ENCODE measurements at regions of chr2 and their contacts with region 1.

Region 1: GRCh38 chr2:201363857-201364560 is 6.9 kb upstream of the FLACC1 start:
- DNase-seq: peak; percentile 64
- ATAC-seq: peak; percentile 90
- H3K4me3 ChIP-seq: no peak overlapping the region
- H3K27ac ChIP-seq: no peak overlapping the region
- H3K4me1 ChIP-seq: no peaks in the 10 kb centered on the region
- H3K27me3 ChIP-seq: no peaks in the 10 kb centered on the region
- CTCF ChIP-seq: peak; percentile 90
- EP300 ChIP-seq: no peak
- POLR2A ChIP-seq: no peak
- RAD21 ChIP-seq: peak; percentile 77

Region 2: DNA sequence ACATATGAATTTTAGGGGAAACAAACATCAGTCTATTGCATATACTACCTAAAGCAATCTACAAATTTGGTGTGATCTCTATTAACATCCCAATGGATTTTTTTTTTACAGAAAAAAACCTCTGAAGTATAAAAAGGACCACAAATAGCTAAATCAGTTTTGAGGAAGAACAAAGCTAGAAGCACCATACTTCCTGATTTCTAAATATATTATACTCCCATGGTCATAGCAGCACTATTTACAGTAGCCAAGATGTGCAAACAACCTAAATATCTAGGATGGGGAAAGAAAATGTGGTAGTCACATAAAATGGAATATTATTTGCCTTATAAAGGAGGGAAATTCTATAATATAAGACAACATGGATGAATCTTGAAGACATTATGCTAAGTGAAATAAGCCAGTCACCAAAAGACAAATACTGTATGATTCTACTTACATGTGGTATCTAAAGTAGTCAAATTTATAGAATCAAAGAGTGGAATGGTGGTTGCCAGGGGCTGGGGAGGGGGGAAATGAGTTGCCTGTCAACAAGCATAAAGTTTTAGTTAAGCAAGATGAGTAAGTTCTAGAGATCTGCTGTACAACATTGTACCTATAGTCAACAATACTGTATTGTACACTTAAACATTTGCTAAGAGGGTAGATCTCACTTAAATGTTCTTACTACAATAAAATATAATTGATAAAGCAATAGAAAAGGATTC is 121.3 kb before region 1 on chr2:
- CTCF ChIA-PET with region 1: interaction called, 3 read pairs
- POLR2A ChIA-PET with region 1: no interaction called
- in situ Hi-C with region 1: loop called (anchors 5 kb)
- intact Hi-C with region 1: no loop called
- DNase-seq: no peak
- ATAC-seq: no peak
- H3K4me3 ChIP-seq: no peak overlapping the region
- H3K27ac ChIP-seq: no peak overlapping the region
- H3K4me1 ChIP-seq: 0 out of 2 replicates have a peak, but pooled peaks cover 3% of the 10 kb centered on the region
- H3K27me3 ChIP-seq: no peaks in the 10 kb centered on the region
- CTCF ChIP-seq: no peak
- EP300 ChIP-seq: no peak
- POLR2A ChIP-seq: no peak
- RAD21 ChIP-seq: no peak

Region 3: GRCh38 chr2:201298462-201299052 is 65.5 kb before region 1 on chr2:
- CTCF ChIA-PET with region 1: no interaction called
- POLR2A ChIA-PET with region 1: no interaction called
- in situ Hi-C with region 1: no loop called
- intact Hi-C with region 1: no loop called
- DNase-seq: no peak
- ATAC-seq: no peak
- H3K4me3 ChIP-seq: no peak overlapping the region
- H3K27ac ChIP-seq: no peak overlapping the region
- H3K4me1 ChIP-seq: no peaks in the 10 kb centered on the region
- H3K27me3 ChIP-seq: no peaks in the 10 kb centered on the region
- CTCF ChIP-seq: no peak
- EP300 ChIP-seq: no peak
- POLR2A ChIP-seq: no peak
- RAD21 ChIP-seq: no peak

Region 4: DNA sequence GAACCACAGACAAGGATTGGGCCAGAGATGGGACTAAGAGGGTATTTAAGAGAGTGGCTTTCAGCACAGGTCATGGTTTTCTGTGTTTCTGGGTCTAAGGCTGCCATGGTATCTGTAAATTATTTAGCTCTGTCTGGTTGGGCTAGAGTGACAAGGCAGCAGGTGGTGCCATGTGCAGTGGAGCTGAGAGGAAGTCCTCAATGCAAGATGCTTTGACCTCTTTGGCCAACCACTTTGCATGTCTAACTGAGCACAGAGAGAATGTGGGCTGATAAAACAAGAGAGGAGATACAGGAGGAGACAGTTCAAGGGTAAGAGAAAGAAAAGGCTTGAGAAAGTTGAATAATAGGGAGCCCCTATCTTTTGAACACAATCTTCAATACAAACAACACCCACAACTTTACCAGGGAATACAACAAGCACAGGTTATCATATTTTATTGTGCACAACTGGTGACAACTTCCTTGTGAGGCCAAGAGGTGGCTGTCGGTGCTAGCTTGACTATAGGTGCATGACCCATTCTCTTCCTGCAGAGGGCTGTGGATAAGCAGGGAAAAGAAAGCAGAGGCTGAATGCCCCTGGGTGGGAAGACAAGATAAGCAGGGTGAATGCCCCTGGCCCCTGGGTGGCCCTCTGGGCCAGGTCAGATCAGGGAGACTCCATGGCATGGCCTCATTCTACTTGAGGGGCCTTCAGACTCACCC is 19.2 kb before region 1 on chr2:
- CTCF ChIA-PET with region 1: no interaction called
- POLR2A ChIA-PET with region 1: no interaction called
- in situ Hi-C with region 1: no loop called
- intact Hi-C with region 1: loop called (anchors 1 kb)
- DNase-seq: peak; percentile 59
- ATAC-seq: peak; percentile 97
- H3K4me3 ChIP-seq: no peak overlapping the region
- H3K27ac ChIP-seq: no peak overlapping the region
- H3K4me1 ChIP-seq: peaks cover 7% of the 10 kb centered on the region; the same call in 1 of the 2 replicates
- H3K27me3 ChIP-seq: no peaks in the 10 kb centered on the region; a peak in 1 of 5 replicates
- CTCF ChIP-seq: peak; percentile 59
- EP300 ChIP-seq: no peak
- POLR2A ChIP-seq: no peak
- RAD21 ChIP-seq: peak; percentile 65

Measured in HepG2 (cell line).